H1 (cell line): ENCODE measurements at regions of chr15 and their contacts with region 1.

Region 1: GRCh38 chr15:56052395-56053045 is 59.1 kb upstream of the NEDD4 start:
- DNase-seq: no peak
- H3K4me3 ChIP-seq: no peak overlapping the region
- H3K27ac ChIP-seq: no peak overlapping the region
- H3K4me1 ChIP-seq: no peaks in the 10 kb centered on the region
- H3K27me3 ChIP-seq: no peaks in the 10 kb centered on the region
- CTCF ChIP-seq: peak in 2 of 3 experiments; percentile 46 to 59; a peak in 2 of 4 replicates
- EP300 ChIP-seq: no peak
- POLR2A ChIP-seq: no peak
- RAD21 ChIP-seq: peak; percentile 55 to 61

Region 2: GRCh38 chr15:55649054-55649423 is 403.5 kb before region 1 on chr15:
- CTCF ChIA-PET with region 1: no interaction called
- POLR2A ChIA-PET with region 1: no interaction called
- DNase-seq: no peak
- H3K4me3 ChIP-seq: no peak overlapping the region
- H3K27ac ChIP-seq: no peak overlapping the region
- H3K4me1 ChIP-seq: peaks cover 2 to 6% (median 5%) of the 10 kb centered on the region in 4 experiments; a peak in 5 of 7 replicates
- H3K27me3 ChIP-seq: no peaks in the 10 kb centered on the region
- CTCF ChIP-seq: no peak
- EP300 ChIP-seq: no peak
- POLR2A ChIP-seq: no peak
- RAD21 ChIP-seq: no peak

Region 3: GRCh38 chr15:56040081-56041035 is 12.2 kb before region 1 on chr15:
- CTCF ChIA-PET with region 1: interaction called, 18 read pairs
- POLR2A ChIA-PET with region 1: no interaction called
- DNase-seq: peak in 1 of 2 experiments; percentile 25
- H3K4me3 ChIP-seq: no peak overlapping the region
- H3K27ac ChIP-seq: no peak overlapping the region
- H3K4me1 ChIP-seq: peaks cover 0 to 5% (median 2%) of the 10 kb centered on the region in 4 experiments; a peak in 4 of 7 replicates
- H3K27me3 ChIP-seq: no peaks in the 10 kb centered on the region
- CTCF ChIP-seq: no peak
- EP300 ChIP-seq: no peak
- POLR2A ChIP-seq: no peak
- RAD21 ChIP-seq: no peak

Region 4: GRCh38 chr15:56411122-56411749 is 358.7 kb after region 1 on chr15:
- CTCF ChIA-PET with region 1: no interaction called
- POLR2A ChIA-PET with region 1: no interaction called
- DNase-seq: no peak
- H3K4me3 ChIP-seq: no peak overlapping the region
- H3K27ac ChIP-seq: no peak overlapping the region
- H3K4me1 ChIP-seq: no peaks in the 10 kb centered on the region
- H3K27me3 ChIP-seq: no peaks in the 10 kb centered on the region
- CTCF ChIP-seq: no peak
- EP300 ChIP-seq: no peak
- POLR2A ChIP-seq: no peak
- RAD21 ChIP-seq: no peak